GM12878 (cell line): ENCODE measurements at regions of chr12 and their contacts with region 1.

Region 1: GRCh38 chr12:80622271-80622670 is 85.2 kb upstream of the MYF6 start:
- DNase-seq: no peak
- ATAC-seq: no peak
- H3K4me3 ChIP-seq: no peak overlapping the region
- H3K27ac ChIP-seq: no peak overlapping the region
- H3K4me1 ChIP-seq: no peaks in the 10 kb centered on the region
- H3K27me3 ChIP-seq: no peaks in the 10 kb centered on the region; a peak in 1 of 4 replicates
- CTCF ChIP-seq: 0 out of 6 replicates have a peak, but pooled peaks of 1 of the 3 experiments have one; percentile 8
- EP300 ChIP-seq: no peak
- POLR2A ChIP-seq: no peak
- RAD21 ChIP-seq: no peak

Region 2: GRCh38 chr12:80632835-80633234 is 10.6 kb after region 1 on chr12:
- CTCF ChIA-PET with region 1: interaction called, 11 read pairs
- POLR2A ChIA-PET with region 1: no interaction called
- RAD21 ChIA-PET with region 1: no interaction called
- SMC1A ChIA-PET with region 1: interaction called, 7 read pairs
- in situ Hi-C with region 1: no loop called
- intact Hi-C with region 1: no loop called
- DNase-seq: no peak
- ATAC-seq: peak; percentile 42
- H3K4me3 ChIP-seq: no peak overlapping the region
- H3K27ac ChIP-seq: no peak overlapping the region
- H3K4me1 ChIP-seq: no peaks in the 10 kb centered on the region
- H3K27me3 ChIP-seq: no peaks in the 10 kb centered on the region
- CTCF ChIP-seq: peak; percentile 24 to 38 (median 37); a peak in 4 of 6 replicates
- EP300 ChIP-seq: no peak
- POLR2A ChIP-seq: no peak
- RAD21 ChIP-seq: 0 out of 2 replicates have a peak, but pooled peaks have one; percentile 16

Region 3: GRCh38 chr12:81039231-81039630 is 417.0 kb after region 1 on chr12:
- CTCF ChIA-PET with region 1: no interaction called
- POLR2A ChIA-PET with region 1: no interaction called
- RAD21 ChIA-PET with region 1: no interaction called
- SMC1A ChIA-PET with region 1: no interaction called
- in situ Hi-C with region 1: no loop called
- intact Hi-C with region 1: no loop called
- DNase-seq: no peak
- ATAC-seq: no peak
- H3K4me3 ChIP-seq: no peak overlapping the region
- H3K27ac ChIP-seq: no peak overlapping the region
- H3K4me1 ChIP-seq: no peaks in the 10 kb centered on the region
- H3K27me3 ChIP-seq: no peaks in the 10 kb centered on the region
- CTCF ChIP-seq: no peak
- EP300 ChIP-seq: no peak
- POLR2A ChIP-seq: no peak
- RAD21 ChIP-seq: no peak